CD4-positive, alpha-beta memory T cell (primary cell): ENCODE measurements at regions of chr14 and their contacts with region 1.

Region 1: GRCh38 chr14:98138666-98139065 is 1133.3 kb downstream of the BCL11B start:
- DNase-seq: peak; percentile 69 to 81 (median 76)
- H3K4me3 ChIP-seq: peak overlapping the region in 1 of 2 donors; percentile 1
- H3K4me3 Mint-ChIP-seq: peak overlapping the region; percentile 52 to 88 (median 74)
- H3K27ac ChIP-seq: peak overlapping the region; percentile 59
- H3K27ac Mint-ChIP-seq: peak overlapping the region; percentile 84 to 96 (median 92)
- H3K4me1 ChIP-seq: peaks cover 88% of the 10 kb centered on the region
- H3K4me1 Mint-ChIP-seq: peaks cover 59 to 90% (median 77%) of the 10 kb centered on the region in 4 donors
- H3K27me3 ChIP-seq: no peaks in the 10 kb centered on the region
- H3K27me3 Mint-ChIP-seq: no peaks in the 10 kb centered on the region

Region 2: DNA sequence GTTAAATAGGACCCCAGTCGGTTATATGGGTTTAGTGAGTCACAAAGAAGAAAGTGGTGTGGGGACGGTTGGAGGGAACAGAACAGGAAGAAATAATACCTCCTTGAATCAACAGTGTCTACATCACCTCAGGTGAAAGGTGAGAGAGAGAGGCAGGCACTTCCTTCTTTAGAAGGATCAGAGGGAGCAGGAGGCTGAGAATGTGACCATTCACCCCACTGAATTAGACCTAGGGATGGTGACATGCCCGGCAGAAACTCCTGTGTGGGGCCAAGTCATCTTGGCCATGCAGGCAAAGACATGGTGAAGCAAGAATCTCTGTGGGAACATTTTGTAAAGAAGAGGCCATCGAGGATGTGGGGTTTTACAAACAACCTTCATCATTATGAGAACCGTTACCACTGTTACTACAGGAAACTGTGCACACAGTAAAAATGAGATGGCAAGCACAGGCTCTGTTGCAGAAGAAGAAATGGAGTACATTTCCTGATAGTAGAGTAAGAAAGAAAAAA is 144.6 kb before region 1 on chr14:
- CTCF ChIA-PET with region 1: interaction called, 10 read pairs
- POLR2A ChIA-PET with region 1: interaction called, 10 read pairs
- intact Hi-C with region 1: loop called (anchors 5 kb)
- DNase-seq: peak; percentile 66 to 75 (median 71)
- H3K4me3 ChIP-seq: no peak overlapping the region
- H3K4me3 Mint-ChIP-seq: peak overlapping the region in 7 of 8 donors; percentile 28 to 72 (median 67)
- H3K27ac ChIP-seq: peak overlapping the region; percentile 50
- H3K27ac Mint-ChIP-seq: peak overlapping the region; percentile 82 to 96 (median 92)
- H3K4me1 ChIP-seq: peaks cover 59% of the 10 kb centered on the region
- H3K4me1 Mint-ChIP-seq: peaks cover 54 to 78% (median 66%) of the 10 kb centered on the region in 4 donors
- H3K27me3 ChIP-seq: no peaks in the 10 kb centered on the region
- H3K27me3 Mint-ChIP-seq: no peaks in the 10 kb centered on the region

Region 3: DNA sequence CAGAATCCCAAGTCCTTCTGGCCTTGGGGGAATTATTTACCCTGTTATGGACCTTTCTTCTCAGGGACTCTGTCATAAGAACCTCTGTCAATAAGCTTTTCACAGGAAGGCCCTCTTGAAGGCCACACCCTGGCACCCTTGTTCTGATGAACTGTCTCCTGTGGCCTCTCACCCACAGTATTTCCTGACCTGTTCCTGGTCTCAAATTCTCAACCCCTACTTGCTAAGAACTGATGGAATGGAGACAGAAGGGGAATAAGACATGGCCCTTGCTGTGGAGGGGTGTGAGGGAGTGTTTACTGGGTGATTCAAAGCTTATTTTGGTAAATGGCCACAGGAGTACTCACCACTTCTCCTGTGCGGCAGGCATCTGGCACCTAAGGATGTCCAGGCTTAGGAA is 50.4 kb after region 1 on chr14:
- CTCF ChIA-PET with region 1: interaction called, 87 read pairs
- POLR2A ChIA-PET with region 1: interaction called, 106 read pairs
- intact Hi-C with region 1: loop called (anchors 5 kb)
- DNase-seq: peak in 1 of 5 donors; percentile 39
- H3K4me3 ChIP-seq: peak overlapping the region; percentile 38 to 42
- H3K4me3 Mint-ChIP-seq: peak overlapping the region; percentile 67 to 85 (median 80)
- H3K27ac ChIP-seq: peak overlapping the region; percentile 65
- H3K27ac Mint-ChIP-seq: peak overlapping the region; percentile 84 to 98 (median 94)
- H3K4me1 ChIP-seq: peaks cover 100% of the 10 kb centered on the region
- H3K4me1 Mint-ChIP-seq: peaks cover 84 to 100% (median 94%) of the 10 kb centered on the region in 4 donors
- H3K27me3 ChIP-seq: no peaks in the 10 kb centered on the region
- H3K27me3 Mint-ChIP-seq: no peaks in the 10 kb centered on the region

Region 4: GRCh38 chr14:98444077-98444476 is 305.4 kb after region 1 on chr14:
- CTCF ChIA-PET with region 1: interaction called, 23 read pairs
- POLR2A ChIA-PET with region 1: interaction called, 20 read pairs
- intact Hi-C with region 1: no loop called
- DNase-seq: peak; percentile 70 to 77 (median 72)
- H3K4me3 ChIP-seq: peak overlapping the region; percentile 5 to 10
- H3K4me3 Mint-ChIP-seq: peak overlapping the region; percentile 60 to 85 (median 80)
- H3K27ac ChIP-seq: peak overlapping the region; percentile 17
- H3K27ac Mint-ChIP-seq: peak overlapping the region; percentile 93 to 99 (median 97)
- H3K4me1 ChIP-seq: peaks cover 37% of the 10 kb centered on the region
- H3K4me1 Mint-ChIP-seq: peaks cover 22 to 48% (median 35%) of the 10 kb centered on the region in 4 donors
- H3K27me3 ChIP-seq: no peaks in the 10 kb centered on the region
- H3K27me3 Mint-ChIP-seq: no peaks in the 10 kb centered on the region

Region 5: DNA sequence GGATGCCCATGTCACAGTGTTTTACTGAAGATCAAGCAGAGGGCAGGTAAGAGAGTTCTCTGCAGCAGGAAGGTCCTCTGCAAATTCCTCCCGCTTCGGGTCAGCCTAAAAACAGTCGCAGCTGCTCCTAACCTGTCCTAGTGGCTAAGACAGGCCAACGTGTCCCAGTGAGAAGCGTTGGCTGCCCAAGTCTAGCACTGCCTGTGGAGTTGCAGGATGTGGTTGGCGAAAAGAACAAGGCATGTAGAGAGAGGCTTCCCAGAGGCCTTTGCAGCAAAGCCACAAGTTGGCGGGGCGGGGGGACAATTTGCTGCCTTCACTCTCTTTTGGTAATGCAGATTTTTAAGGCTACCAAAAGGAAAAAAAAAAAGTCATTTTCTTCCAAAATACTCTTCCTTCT is 793.2 kb after region 1 on chr14:
- CTCF ChIA-PET with region 1: interaction called, 3 read pairs
- POLR2A ChIA-PET with region 1: interaction called, 3 read pairs
- intact Hi-C with region 1: loop called (anchors 5 kb)
- DNase-seq: peak; percentile 82 to 85 (median 84)
- H3K4me3 ChIP-seq: peak overlapping the region in 1 of 2 donors; percentile 41
- H3K4me3 Mint-ChIP-seq: peak overlapping the region; percentile 68 to 91 (median 83)
- H3K27ac ChIP-seq: peak overlapping the region; percentile 16
- H3K27ac Mint-ChIP-seq: peak overlapping the region; percentile 79 to 97 (median 91)
- H3K4me1 ChIP-seq: peaks cover 66% of the 10 kb centered on the region
- H3K4me1 Mint-ChIP-seq: peaks cover 62 to 91% (median 78%) of the 10 kb centered on the region in 4 donors
- H3K27me3 ChIP-seq: no peaks in the 10 kb centered on the region
- H3K27me3 Mint-ChIP-seq: no peaks in the 10 kb centered on the region

Region 6: GRCh38 chr14:99271951-99272631 is 1133.4 kb after region 1 on chr14 and contains the start of gene BCL11B:
- CTCF ChIA-PET with region 1: interaction called, 100 read pairs
- POLR2A ChIA-PET with region 1: interaction called, 265 read pairs
- intact Hi-C with region 1: loop called (anchors 1 kb)
- DNase-seq: peak; percentile 87 to 96 (median 91)
- H3K4me3 ChIP-seq: peak within 1 kb of the TSS; percentile 91 to 93
- H3K4me3 Mint-ChIP-seq: peak within 1 kb of the TSS; percentile 92 to 100 (median 98)
- H3K27ac ChIP-seq: peak within 1 kb of the TSS; percentile 80
- H3K27ac Mint-ChIP-seq: peak within 1 kb of the TSS; percentile 95 to 99 (median 96)
- H3K4me1 ChIP-seq: peaks cover 21% of the 10 kb centered on the region
- H3K4me1 Mint-ChIP-seq: peaks cover 12 to 53% (median 27%) of the 10 kb centered on the region in 4 donors
- H3K27me3 ChIP-seq: no peaks in the 10 kb centered on the region
- H3K27me3 Mint-ChIP-seq: no peaks in the 10 kb centered on the region
- total RNA-seq, gene BCL11B: 163 to 165 TPM